CD8-positive, alpha-beta T cell (primary cell): ENCODE measurements at regions of chr7 and their contacts with region 1.

Region 1: GRCh38 chr7:152025077-152025936 is at the start of gene GALNT11:
- DNase-seq: peak; percentile 76 to 95 (median 89)
- ATAC-seq: peak; percentile 78
- H3K4me3 ChIP-seq: peak within 1 kb of the TSS; percentile 66 to 81
- H3K4me3 Mint-ChIP-seq: peak within 1 kb of the TSS; percentile 87
- H3K27ac ChIP-seq: peak within 1 kb of the TSS; percentile 80 to 85
- H3K27ac Mint-ChIP-seq: peak within 1 kb of the TSS; percentile 95
- H3K4me1 ChIP-seq: peaks cover 37% of the 10 kb centered on the region
- H3K4me1 Mint-ChIP-seq: peaks cover 45% of the 10 kb centered on the region
- H3K27me3 ChIP-seq: no peaks in the 10 kb centered on the region
- H3K27me3 Mint-ChIP-seq: no peaks in the 10 kb centered on the region
- CTCF ChIP-seq: peak; percentile 17
- total RNA-seq, gene GALNT11: 43.1 to 44.5 TPM

Region 2: GRCh38 chr7:151519765-151520418 is 505.4 kb before region 1 on chr7 and contains the start of gene RHEB:
- CTCF ChIA-PET with region 1: no interaction called
- POLR2A ChIA-PET with region 1: no interaction called
- intact Hi-C with region 1: loop called in 1 of 2 experiments (anchors 5 kb)
- DNase-seq: peak; percentile 94 to 99 (median 98)
- ATAC-seq: peak; percentile 82
- H3K4me3 ChIP-seq: peak within 1 kb of the TSS; percentile 65 to 73
- H3K4me3 Mint-ChIP-seq: peak within 1 kb of the TSS; percentile 84
- H3K27ac ChIP-seq: peak within 1 kb of the TSS; percentile 85 to 86
- H3K27ac Mint-ChIP-seq: peak within 1 kb of the TSS; percentile 94
- H3K4me1 ChIP-seq: peaks cover 34% of the 10 kb centered on the region
- H3K4me1 Mint-ChIP-seq: peaks cover 41% of the 10 kb centered on the region
- H3K27me3 ChIP-seq: no peaks in the 10 kb centered on the region
- H3K27me3 Mint-ChIP-seq: no peaks in the 10 kb centered on the region
- CTCF ChIP-seq: no peak
- total RNA-seq, gene RHEB: 57.2 to 61.0 TPM

Region 3: GRCh38 chr7:151876899-151877777 is 148.2 kb before region 1 on chr7 and contains the start of gene PRKAG2:
- CTCF ChIA-PET with region 1: no interaction called
- POLR2A ChIA-PET with region 1: no interaction called
- intact Hi-C with region 1: loop called (anchors 1 to 2 kb)
- DNase-seq: peak; percentile 53 to 85 (median 78)
- ATAC-seq: peak; percentile 59
- H3K4me3 ChIP-seq: peak within 1 kb of the TSS; percentile 71 to 95
- H3K4me3 Mint-ChIP-seq: peak within 1 kb of the TSS; percentile 97
- H3K27ac ChIP-seq: peak within 1 kb of the TSS; percentile 53 to 67
- H3K27ac Mint-ChIP-seq: peak within 1 kb of the TSS; percentile 92
- H3K4me1 ChIP-seq: peaks cover 20% of the 10 kb centered on the region
- H3K4me1 Mint-ChIP-seq: peaks cover 25% of the 10 kb centered on the region
- H3K27me3 ChIP-seq: no peaks in the 10 kb centered on the region
- H3K27me3 Mint-ChIP-seq: no peaks in the 10 kb centered on the region
- CTCF ChIP-seq: peak; percentile 27
- total RNA-seq, gene PRKAG2: 41.3 to 41.8 TPM

Region 4: DNA sequence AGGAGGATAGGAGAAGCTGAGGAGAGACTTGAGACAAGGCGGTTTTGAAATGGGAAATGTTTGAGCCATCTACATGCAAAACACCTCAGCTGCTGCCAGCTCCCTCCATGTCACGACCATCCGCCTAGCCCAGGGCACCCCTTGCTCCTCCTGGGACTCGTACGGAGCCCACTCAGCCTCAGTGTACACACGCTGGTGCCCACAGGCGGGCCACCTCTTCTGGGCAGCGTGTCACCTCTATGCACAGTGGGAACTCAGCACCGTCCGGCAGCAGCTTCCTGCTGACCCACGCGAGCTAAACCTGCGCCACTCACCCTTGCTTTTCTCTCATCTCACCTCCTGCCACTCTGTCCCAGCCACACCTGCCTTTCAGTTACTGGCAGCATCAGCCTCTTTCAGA is 108.5 kb after region 1 on chr7:
- CTCF ChIA-PET with region 1: no interaction called
- POLR2A ChIA-PET with region 1: no interaction called
- intact Hi-C with region 1: loop called in 1 of 2 experiments (anchors 5 kb)
- DNase-seq: no peak
- ATAC-seq: no peak
- H3K4me3 ChIP-seq: no peak overlapping the region
- H3K4me3 Mint-ChIP-seq: no peak overlapping the region
- H3K27ac ChIP-seq: no peak overlapping the region
- H3K27ac Mint-ChIP-seq: peak overlapping the region; percentile 14
- H3K4me1 ChIP-seq: no peaks in the 10 kb centered on the region
- H3K4me1 Mint-ChIP-seq: no peaks in the 10 kb centered on the region
- H3K27me3 ChIP-seq: no peaks in the 10 kb centered on the region
- H3K27me3 Mint-ChIP-seq: no peaks in the 10 kb centered on the region
- CTCF ChIP-seq: no peak

Region 5: GRCh38 chr7:152675759-152676636 is 650.7 kb after region 1 on chr7 and contains the start of gene XRCC2:
- CTCF ChIA-PET with region 1: no interaction called
- POLR2A ChIA-PET with region 1: no interaction called
- intact Hi-C with region 1: loop called in 1 of 2 experiments (anchors 5 kb)
- DNase-seq: peak; percentile 88 to 99 (median 96)
- ATAC-seq: peak; percentile 94
- H3K4me3 ChIP-seq: peak within 1 kb of the TSS; percentile 65 to 89
- H3K4me3 Mint-ChIP-seq: peak within 1 kb of the TSS; percentile 96
- H3K27ac ChIP-seq: peak within 1 kb of the TSS; percentile 79 to 87
- H3K27ac Mint-ChIP-seq: peak within 1 kb of the TSS; percentile 83
- H3K4me1 ChIP-seq: peaks cover 8% of the 10 kb centered on the region
- H3K4me1 Mint-ChIP-seq: peaks cover 11% of the 10 kb centered on the region
- H3K27me3 ChIP-seq: no peaks in the 10 kb centered on the region
- H3K27me3 Mint-ChIP-seq: no peaks in the 10 kb centered on the region
- CTCF ChIP-seq: no peak
- total RNA-seq, gene XRCC2: 0.17 to 0.30 TPM